PC-3 (cell line): ENCODE measurements at regions of chr9 and their contacts with region 1.

Region 1: DNA sequence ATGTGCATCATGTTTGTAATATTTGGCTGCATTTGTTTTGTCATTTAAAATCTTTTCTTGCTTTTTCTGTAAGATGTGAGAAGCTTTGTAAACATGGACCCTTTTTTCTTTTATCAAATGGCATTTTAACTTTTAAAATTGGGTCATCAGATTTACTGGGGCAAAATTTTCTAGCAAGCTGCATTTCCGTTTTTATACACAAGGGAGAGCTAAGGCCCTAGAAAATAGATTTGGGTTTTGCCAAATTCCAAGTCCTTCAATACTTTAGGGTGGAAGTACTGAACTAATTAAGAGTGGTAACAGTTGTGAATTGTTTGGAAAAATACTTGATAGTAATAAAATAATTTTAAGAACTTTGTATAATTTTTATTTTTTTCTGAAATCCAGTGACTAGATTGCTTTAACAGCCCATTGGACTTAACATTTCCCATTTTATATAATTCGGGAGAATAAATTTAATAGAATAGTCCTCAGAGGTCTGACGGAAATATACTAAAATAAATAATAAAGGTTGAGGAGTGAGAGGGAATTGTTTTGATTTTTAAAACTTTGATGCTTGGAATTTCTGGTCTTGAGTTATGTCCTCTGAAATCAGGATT is 117.4 kb downstream of the SMARCA2 start:
- DNase-seq: peak; percentile 51
- ATAC-seq: 0 out of 2 replicates have a peak, but pooled peaks have one; percentile 15
- H3K4me3 ChIP-seq: no peak overlapping the region
- H3K27ac ChIP-seq: no peak overlapping the region
- H3K4me1 ChIP-seq: no peaks in the 10 kb centered on the region
- H3K27me3 ChIP-seq: no peaks in the 10 kb centered on the region
- CTCF ChIP-seq: peak; percentile 66

Region 2: DNA sequence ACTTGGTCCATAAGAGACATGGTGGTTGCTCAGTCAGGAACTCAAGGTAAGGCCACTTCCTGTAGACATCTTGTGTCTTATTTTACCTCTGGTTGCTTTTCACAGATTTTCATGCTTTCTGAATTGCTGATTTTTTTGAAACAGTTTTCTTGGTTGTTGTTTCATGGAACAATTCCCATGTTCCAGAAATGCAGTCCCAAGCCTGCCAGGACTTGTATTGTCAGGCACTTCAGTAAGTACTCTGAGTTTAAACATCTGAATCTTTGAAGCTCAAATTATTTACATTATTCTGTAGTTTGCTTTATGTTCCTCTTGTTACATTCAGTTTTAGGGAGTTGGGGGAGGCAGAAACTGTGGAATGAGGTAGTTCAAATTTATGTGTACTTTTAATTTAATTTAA is 792.2 kb before region 1 on chr9:
- CTCF ChIA-PET with region 1: no interaction called
- POLR2A ChIA-PET with region 1: no interaction called
- intact Hi-C with region 1: no loop called
- DNase-seq: no peak
- ATAC-seq: no peak
- H3K4me3 ChIP-seq: no peak overlapping the region
- H3K27ac ChIP-seq: no peak overlapping the region
- H3K4me1 ChIP-seq: peaks cover 11% of the 10 kb centered on the region
- H3K27me3 ChIP-seq: no peaks in the 10 kb centered on the region
- CTCF ChIP-seq: no peak

Region 3: DNA sequence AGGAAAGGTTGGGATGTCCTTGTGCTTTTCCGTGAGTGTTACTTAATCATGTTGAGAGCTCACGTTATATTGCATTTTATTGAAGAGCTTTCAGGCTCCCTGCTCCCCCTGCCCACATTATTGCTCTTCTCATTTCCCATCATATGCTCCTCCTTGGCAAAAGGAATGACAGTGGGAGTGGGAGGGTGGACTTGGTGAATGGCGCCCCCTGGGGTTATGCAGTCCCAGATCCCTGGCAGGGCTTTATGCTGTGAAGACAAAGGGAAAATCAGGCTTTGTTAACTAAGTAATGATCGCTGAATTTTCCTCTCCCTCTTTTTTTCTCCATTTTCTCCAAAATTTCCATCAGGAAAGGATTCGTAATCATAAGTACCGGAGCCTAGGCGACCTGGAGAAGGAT is 49.2 kb after region 1 on chr9:
- CTCF ChIA-PET with region 1: no interaction called
- POLR2A ChIA-PET with region 1: no interaction called
- intact Hi-C with region 1: loop called (anchors 1 kb)
- DNase-seq: peak; percentile 17
- ATAC-seq: peak; percentile 45; the same call in 1 of the 2 replicates
- H3K4me3 ChIP-seq: no peak overlapping the region
- H3K27ac ChIP-seq: no peak overlapping the region
- H3K4me1 ChIP-seq: no peaks in the 10 kb centered on the region
- H3K27me3 ChIP-seq: no peaks in the 10 kb centered on the region
- CTCF ChIP-seq: peak; percentile 67

Region 4: GRCh38 chr9:2837915-2838314 is 705.3 kb after region 1 on chr9:
- CTCF ChIA-PET with region 1: no interaction called
- POLR2A ChIA-PET with region 1: no interaction called
- intact Hi-C with region 1: loop called (anchors 5 kb)
- DNase-seq: no peak
- ATAC-seq: no peak
- H3K4me3 ChIP-seq: no peak overlapping the region
- H3K27ac ChIP-seq: no peak overlapping the region
- H3K4me1 ChIP-seq: peaks cover 12% of the 10 kb centered on the region
- H3K27me3 ChIP-seq: no peaks in the 10 kb centered on the region
- CTCF ChIP-seq: peak; percentile 25; the same call in 1 of the 2 replicates